ENCODE measurements at regions of chr3 and their contacts with region 1.

Region 1: GRCh38 chr3:128426128-128426921 is 40.4 kb downstream of the DNAJB8 start:
- DNase-seq: peak; percentile 12 to 47 (median 45)
- H3K4me3 ChIP-seq: peak overlapping the region in 2 of 3 experiments; percentile 18 to 65
- H3K4me3 Mint-ChIP-seq: peak overlapping the region in 1 of 2 donors; percentile 59
- H3K27ac ChIP-seq: no peak overlapping the region
- H3K27ac Mint-ChIP-seq: no peak overlapping the region
- H3K4me1 ChIP-seq: peaks cover 7 to 11% of the 10 kb centered on the region in 2 donors
- H3K4me1 Mint-ChIP-seq: no peaks in the 10 kb centered on the region
- H3K27me3 ChIP-seq: peaks cover 0 to 21% of the 10 kb centered on the region in 2 donors
- H3K27me3 Mint-ChIP-seq: peaks cover 15 to 32% (median 30%) of the 10 kb centered on the region in 3 donors
- CTCF ChIP-seq: peak; percentile 97

Region 2: GRCh38 chr3:128487813-128488635 is 61.7 kb after region 1 on chr3:
- intact Hi-C with region 1: loop called (anchors 2 to 5 kb)
- DNase-seq: peak; percentile 35 to 62 (median 46)
- H3K4me3 ChIP-seq: peak overlapping the region in 2 of 3 experiments; percentile 51 to 78
- H3K4me3 Mint-ChIP-seq: peak overlapping the region; percentile 85 to 97
- H3K27ac ChIP-seq: no peak overlapping the region
- H3K27ac Mint-ChIP-seq: peak overlapping the region in 1 of 7 donors; percentile 69
- H3K4me1 ChIP-seq: peaks cover 57 to 69% of the 10 kb centered on the region in 2 donors
- H3K4me1 Mint-ChIP-seq: peaks cover 55% of the 10 kb centered on the region
- H3K27me3 ChIP-seq: peaks cover 85 to 99% of the 10 kb centered on the region in 2 donors
- H3K27me3 Mint-ChIP-seq: peaks cover 87 to 100% (median 96%) of the 10 kb centered on the region in 3 donors
- CTCF ChIP-seq: no peak

Region 3: GRCh38 chr3:128584412-128585020 is 158.2 kb after region 1 on chr3:
- intact Hi-C with region 1: loop called in 1 of 2 experiments (anchors 5 kb)
- DNase-seq: peak in 2 of 3 donors; percentile 42 to 68
- H3K4me3 ChIP-seq: no peak overlapping the region
- H3K4me3 Mint-ChIP-seq: peak overlapping the region in 1 of 2 donors; percentile 35
- H3K27ac ChIP-seq: no peak overlapping the region
- H3K27ac Mint-ChIP-seq: no peak overlapping the region
- H3K4me1 ChIP-seq: peaks cover 11 to 13% of the 10 kb centered on the region in 2 donors
- H3K4me1 Mint-ChIP-seq: peaks cover 12% of the 10 kb centered on the region
- H3K27me3 ChIP-seq: peaks cover 0 to 4% of the 10 kb centered on the region in 2 donors
- H3K27me3 Mint-ChIP-seq: peaks cover 0 to 6% (median 4%) of the 10 kb centered on the region in 3 donors
- CTCF ChIP-seq: peak; percentile 66

Region 4: GRCh38 chr3:128686465-128686864 is 260.1 kb after region 1 on chr3:
- intact Hi-C with region 1: no loop called
- DNase-seq: no peak
- H3K4me3 ChIP-seq: no peak overlapping the region
- H3K4me3 Mint-ChIP-seq: no peak overlapping the region
- H3K27ac ChIP-seq: no peak overlapping the region
- H3K27ac Mint-ChIP-seq: peak overlapping the region in 1 of 7 donors; percentile 43
- H3K4me1 ChIP-seq: peaks cover 29 to 31% of the 10 kb centered on the region in 2 donors
- H3K4me1 Mint-ChIP-seq: peaks cover 22% of the 10 kb centered on the region
- H3K27me3 ChIP-seq: no peaks in the 10 kb centered on the region
- H3K27me3 Mint-ChIP-seq: peaks cover 0 to 3% (median 3%) of the 10 kb centered on the region in 3 donors
- CTCF ChIP-seq: no peak

Measured in CD14-positive monocyte (primary cell).